ENCODE measurements at regions of chr3 and their contacts with region 1.

Region 1: GRCh38 chr3:184561061-184561912 is at the start of gene EPHB3:
- DNase-seq: peak; percentile 99
- ATAC-seq: peak; percentile 92
- H3K4me3 Mint-ChIP-seq: peak within 1 kb of the TSS; percentile 50
- H3K27ac Mint-ChIP-seq: peak within 1 kb of the TSS; percentile 32
- H3K4me1 Mint-ChIP-seq: peaks cover 23% of the 10 kb centered on the region
- H3K27me3 Mint-ChIP-seq: peaks cover 23% of the 10 kb centered on the region
- CTCF ChIP-seq: peak; percentile 93
- total RNA-seq, gene EPHB3: 0.07 TPM in 1 of 2 experiments, not detected in the other

Region 2: DNA sequence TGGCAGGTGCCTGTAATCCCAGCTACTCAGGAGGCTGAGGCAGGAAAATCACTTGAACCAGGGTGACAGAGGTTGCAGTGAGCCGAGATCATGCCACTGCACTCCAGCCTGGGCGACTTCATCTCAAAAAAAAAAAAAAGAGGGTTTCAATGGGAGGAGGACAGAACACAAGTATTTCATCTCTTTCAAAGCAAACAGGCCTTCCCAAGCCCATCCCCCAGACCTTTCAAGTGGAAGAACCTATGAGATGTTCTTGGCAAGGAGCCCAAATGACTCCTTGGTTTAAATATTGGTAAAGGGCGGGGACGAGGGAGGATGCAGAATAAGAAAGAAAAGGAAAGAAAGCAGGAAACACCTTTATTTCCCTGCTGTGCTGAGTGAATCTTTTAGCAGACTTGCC is 1070.6 kb before region 1 on chr3:
- CTCF ChIA-PET with region 1: no interaction called
- POLR2A ChIA-PET with region 1: no interaction called
- intact Hi-C with region 1: no loop called
- DNase-seq: no peak
- ATAC-seq: no peak
- H3K4me3 Mint-ChIP-seq: no peak overlapping the region
- H3K27ac Mint-ChIP-seq: no peak overlapping the region
- H3K4me1 Mint-ChIP-seq: peaks cover 5% of the 10 kb centered on the region
- H3K27me3 Mint-ChIP-seq: no peaks in the 10 kb centered on the region
- CTCF ChIP-seq: no peak

Region 3: GRCh38 chr3:184305577-184305976 is 255.7 kb before region 1 on chr3:
- CTCF ChIA-PET with region 1: no interaction called
- POLR2A ChIA-PET with region 1: no interaction called
- intact Hi-C with region 1: no loop called
- DNase-seq: no peak
- ATAC-seq: peak; percentile 56
- H3K4me3 Mint-ChIP-seq: no peak overlapping the region
- H3K27ac Mint-ChIP-seq: no peak overlapping the region
- H3K4me1 Mint-ChIP-seq: peaks cover 19% of the 10 kb centered on the region
- H3K27me3 Mint-ChIP-seq: no peaks in the 10 kb centered on the region
- CTCF ChIP-seq: peak; percentile 59

Region 4: GRCh38 chr3:184727357-184728009 is 166.2 kb after region 1 on chr3:
- CTCF ChIA-PET with region 1: interaction called, 15 read pairs
- POLR2A ChIA-PET with region 1: interaction called, 3 read pairs
- intact Hi-C with region 1: no loop called
- DNase-seq: peak; percentile 70
- ATAC-seq: peak; percentile 87
- H3K4me3 Mint-ChIP-seq: no peak overlapping the region
- H3K27ac Mint-ChIP-seq: no peak overlapping the region
- H3K4me1 Mint-ChIP-seq: no peaks in the 10 kb centered on the region
- H3K27me3 Mint-ChIP-seq: peaks cover 10% of the 10 kb centered on the region
- CTCF ChIP-seq: peak; percentile 66

Measured in activated CD8-positive, alpha-beta T cell treated with anti-CD3 and anti-CD28 coated beads for 36 hours (primary cell).